PC-3 (cell line): ENCODE measurements at regions of chr3 and their contacts with region 1.

Region 1: DNA sequence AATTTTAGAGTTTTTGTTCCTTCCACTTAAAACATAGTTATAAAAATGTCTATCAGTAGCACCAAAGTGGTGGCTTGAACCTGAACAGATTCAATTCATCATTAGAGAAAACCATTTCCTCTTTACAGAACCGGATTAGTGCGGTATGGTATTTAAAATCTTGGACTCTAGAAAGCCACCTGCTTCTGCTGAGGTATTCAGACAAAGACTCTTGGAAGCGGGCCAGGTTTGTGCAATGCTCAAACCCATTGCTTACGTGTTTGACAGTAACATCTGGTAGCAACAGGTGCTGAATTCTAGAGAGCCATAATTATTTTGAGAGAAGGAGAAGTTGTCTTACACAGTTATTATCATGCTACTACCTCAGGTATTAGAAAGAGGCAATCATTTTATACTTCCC is 290.5 kb downstream of the NAALADL2 start:
- DNase-seq: peak; percentile 76
- ATAC-seq: no peak
- H3K4me3 ChIP-seq: no peak overlapping the region
- H3K27ac ChIP-seq: peak overlapping the region; percentile 84
- H3K4me1 ChIP-seq: peaks cover 26% of the 10 kb centered on the region
- H3K27me3 ChIP-seq: no peaks in the 10 kb centered on the region
- CTCF ChIP-seq: no peak

Region 2: DNA sequence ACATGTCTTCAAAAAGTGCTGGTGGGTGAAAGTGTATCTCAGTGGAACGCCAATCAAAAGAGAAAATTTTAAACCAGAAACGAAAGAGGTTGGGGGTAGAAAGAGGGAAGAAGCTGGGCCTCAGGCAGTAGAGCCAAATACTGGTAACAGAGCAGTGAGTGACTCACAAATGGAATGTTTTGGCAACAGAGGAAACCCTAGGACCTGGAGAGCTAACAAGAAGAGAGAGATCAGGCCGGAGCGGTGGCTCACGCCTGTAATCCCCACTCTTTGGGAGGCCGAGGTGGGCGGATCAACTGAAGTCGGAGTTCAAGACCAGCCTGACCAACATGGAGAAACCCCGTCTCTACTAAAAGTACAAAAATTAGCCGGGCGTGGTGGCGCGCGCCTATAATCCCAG is 741.4 kb before region 1 on chr3:
- CTCF ChIA-PET with region 1: no interaction called
- POLR2A ChIA-PET with region 1: no interaction called
- intact Hi-C with region 1: loop called (anchors 5 kb)
- DNase-seq: peak; percentile 77
- ATAC-seq: peak; percentile 87
- H3K4me3 ChIP-seq: no peak overlapping the region
- H3K27ac ChIP-seq: no peak overlapping the region
- H3K4me1 ChIP-seq: peaks cover 25% of the 10 kb centered on the region
- H3K27me3 ChIP-seq: no peaks in the 10 kb centered on the region
- CTCF ChIP-seq: no peak

Region 3: DNA sequence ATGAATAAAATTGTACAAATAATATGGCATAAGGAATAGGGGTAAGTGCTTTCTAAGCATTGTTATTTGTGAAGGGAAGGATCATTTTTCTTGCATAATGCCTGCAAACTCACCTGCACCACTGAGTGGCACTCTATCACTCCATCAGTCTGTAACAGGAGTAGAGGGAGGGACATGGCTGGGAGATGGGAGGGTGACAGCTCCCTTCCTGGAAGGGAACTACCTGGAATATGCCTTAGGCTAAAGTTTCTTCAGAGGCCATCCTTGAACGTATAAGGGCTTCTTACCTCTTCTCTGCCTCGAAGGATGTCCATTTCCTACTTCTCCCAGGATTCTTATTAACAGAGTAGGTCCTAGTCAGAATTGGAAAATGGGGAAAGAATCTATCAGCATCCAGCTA is 287.5 kb before region 1 on chr3:
- CTCF ChIA-PET with region 1: no interaction called
- POLR2A ChIA-PET with region 1: no interaction called
- intact Hi-C with region 1: loop called (anchors 1 kb)
- DNase-seq: peak; percentile 85
- ATAC-seq: peak; percentile 69
- H3K4me3 ChIP-seq: no peak overlapping the region
- H3K27ac ChIP-seq: peak overlapping the region; percentile 59; the same call in 1 of the 2 replicates
- H3K4me1 ChIP-seq: peaks cover 50% of the 10 kb centered on the region
- H3K27me3 ChIP-seq: no peaks in the 10 kb centered on the region
- CTCF ChIP-seq: peak; percentile 87

Region 4: GRCh38 chr3:174986685-174987084 is 163.0 kb before region 1 on chr3:
- CTCF ChIA-PET with region 1: no interaction called
- POLR2A ChIA-PET with region 1: no interaction called
- intact Hi-C with region 1: loop called (anchors 10 kb)
- DNase-seq: peak; percentile 23
- ATAC-seq: peak; percentile 54
- H3K4me3 ChIP-seq: no peak overlapping the region
- H3K27ac ChIP-seq: no peak overlapping the region
- H3K4me1 ChIP-seq: 0 out of 2 replicates have a peak, but pooled peaks cover 6% of the 10 kb centered on the region
- H3K27me3 ChIP-seq: no peaks in the 10 kb centered on the region
- CTCF ChIP-seq: no peak

Region 5: DNA sequence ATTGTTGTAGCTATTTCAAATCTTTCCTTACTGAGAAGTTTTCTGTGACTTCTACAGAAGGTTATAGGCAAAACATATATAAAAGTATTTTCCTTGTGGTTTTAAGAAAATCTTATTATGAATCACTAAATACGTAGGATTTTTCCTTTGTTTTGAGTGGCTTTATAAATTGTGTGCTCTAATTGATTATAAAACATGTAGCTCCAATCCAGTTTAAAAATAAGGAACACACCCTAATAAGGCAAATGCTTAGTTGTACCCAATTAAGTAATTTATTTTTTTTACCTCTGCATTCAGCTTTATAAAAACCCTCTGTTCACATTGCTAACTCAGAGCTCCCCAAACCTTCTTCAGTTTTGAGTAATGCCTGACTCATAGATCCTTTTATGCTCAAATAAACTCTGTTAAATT is 117.5 kb after region 1 on chr3:
- CTCF ChIA-PET with region 1: no interaction called
- POLR2A ChIA-PET with region 1: no interaction called
- intact Hi-C with region 1: loop called (anchors 2 kb)
- DNase-seq: peak; percentile 62
- ATAC-seq: peak; percentile 81
- H3K4me3 ChIP-seq: peak overlapping the region; percentile 14
- H3K27ac ChIP-seq: peak overlapping the region; percentile 94
- H3K4me1 ChIP-seq: peaks cover 27% of the 10 kb centered on the region
- H3K27me3 ChIP-seq: no peaks in the 10 kb centered on the region
- CTCF ChIP-seq: no peak

Region 6: GRCh38 chr3:175410251-175410650 is 260.6 kb after region 1 on chr3:
- CTCF ChIA-PET with region 1: no interaction called
- POLR2A ChIA-PET with region 1: no interaction called
- intact Hi-C with region 1: loop called (anchors 5 kb)
- DNase-seq: peak; percentile 20
- ATAC-seq: peak; percentile 11; the same call in 1 of the 2 replicates
- H3K4me3 ChIP-seq: no peak overlapping the region
- H3K27ac ChIP-seq: no peak overlapping the region
- H3K4me1 ChIP-seq: peaks cover 23% of the 10 kb centered on the region
- H3K27me3 ChIP-seq: no peaks in the 10 kb centered on the region
- CTCF ChIP-seq: no peak

Region 7: GRCh38 chr3:176430244-176431037 is 1280.8 kb after region 1 on chr3:
- CTCF ChIA-PET with region 1: no interaction called
- POLR2A ChIA-PET with region 1: no interaction called
- intact Hi-C with region 1: loop called (anchors 10 kb)
- DNase-seq: peak; percentile 72
- ATAC-seq: peak; percentile 57
- H3K4me3 ChIP-seq: no peak overlapping the region
- H3K27ac ChIP-seq: no peak overlapping the region
- H3K4me1 ChIP-seq: no peaks in the 10 kb centered on the region
- H3K27me3 ChIP-seq: no peaks in the 10 kb centered on the region
- CTCF ChIP-seq: peak; percentile 87